H1 (cell line): ENCODE measurements at regions of chr9 and their contacts with region 1.

Region 1: GRCh38 chr9:14561929-14562405 is 131.3 kb downstream of the ZDHHC21 start:
- DNase-seq: peak in 1 of 2 experiments; percentile 62
- H3K4me3 ChIP-seq: no peak overlapping the region
- H3K27ac ChIP-seq: no peak overlapping the region
- H3K4me1 ChIP-seq: peaks cover 0 to 9% (median 3%) of the 10 kb centered on the region in 4 experiments; a peak in 4 of 7 replicates
- H3K27me3 ChIP-seq: no peaks in the 10 kb centered on the region
- CTCF ChIP-seq: no peak
- EP300 ChIP-seq: no peak
- POLR2A ChIP-seq: no peak
- RAD21 ChIP-seq: no peak

Region 2: GRCh38 chr9:14372437-14373335 is 189.3 kb before region 1 on chr9:
- CTCF ChIA-PET with region 1: no interaction called
- POLR2A ChIA-PET with region 1: no interaction called
- DNase-seq: peak in 1 of 2 experiments; percentile 73
- H3K4me3 ChIP-seq: no peak overlapping the region
- H3K27ac ChIP-seq: no peak overlapping the region
- H3K4me1 ChIP-seq: peaks cover 0 to 7% (median 4%) of the 10 kb centered on the region in 4 experiments; a peak in 2 of 7 replicates
- H3K27me3 ChIP-seq: no peaks in the 10 kb centered on the region
- CTCF ChIP-seq: no peak
- EP300 ChIP-seq: no peak
- POLR2A ChIP-seq: no peak
- RAD21 ChIP-seq: no peak

Region 3: GRCh38 chr9:14547245-14548060 is 14.5 kb before region 1 on chr9:
- CTCF ChIA-PET with region 1: interaction called, 11 read pairs
- POLR2A ChIA-PET with region 1: interaction called, 11 read pairs
- DNase-seq: peak; percentile 72 to 95
- H3K4me3 ChIP-seq: peak overlapping the region in 1 of 4 experiments; percentile 36; a peak in 1 of 8 replicates
- H3K27ac ChIP-seq: peak overlapping the region; percentile 89
- H3K4me1 ChIP-seq: peaks cover 3 to 20% (median 14%) of the 10 kb centered on the region in 4 experiments; a peak in 6 of 7 replicates
- H3K27me3 ChIP-seq: no peaks in the 10 kb centered on the region
- CTCF ChIP-seq: peak; percentile 52 to 84 (median 82)
- EP300 ChIP-seq: peak in 1 of 2 experiments; percentile 91; a peak in 1 of 3 replicates
- POLR2A ChIP-seq: peak in 1 of 2 experiments; percentile 62; a peak in 1 of 3 replicates
- RAD21 ChIP-seq: peak; percentile 74 to 78

Region 4: GRCh38 chr9:14573333-14573732 is 11.4 kb after region 1 on chr9:
- CTCF ChIA-PET with region 1: interaction called, 10 read pairs
- POLR2A ChIA-PET with region 1: interaction called, 3 read pairs
- DNase-seq: no peak
- H3K4me3 ChIP-seq: no peak overlapping the region
- H3K27ac ChIP-seq: no peak overlapping the region
- H3K4me1 ChIP-seq: no peaks in the 10 kb centered on the region
- H3K27me3 ChIP-seq: no peaks in the 10 kb centered on the region
- CTCF ChIP-seq: no peak
- EP300 ChIP-seq: no peak
- POLR2A ChIP-seq: no peak
- RAD21 ChIP-seq: no peak